ENCODE measurements at regions of chr6 and their contacts with region 1.

Region 1: DNA sequence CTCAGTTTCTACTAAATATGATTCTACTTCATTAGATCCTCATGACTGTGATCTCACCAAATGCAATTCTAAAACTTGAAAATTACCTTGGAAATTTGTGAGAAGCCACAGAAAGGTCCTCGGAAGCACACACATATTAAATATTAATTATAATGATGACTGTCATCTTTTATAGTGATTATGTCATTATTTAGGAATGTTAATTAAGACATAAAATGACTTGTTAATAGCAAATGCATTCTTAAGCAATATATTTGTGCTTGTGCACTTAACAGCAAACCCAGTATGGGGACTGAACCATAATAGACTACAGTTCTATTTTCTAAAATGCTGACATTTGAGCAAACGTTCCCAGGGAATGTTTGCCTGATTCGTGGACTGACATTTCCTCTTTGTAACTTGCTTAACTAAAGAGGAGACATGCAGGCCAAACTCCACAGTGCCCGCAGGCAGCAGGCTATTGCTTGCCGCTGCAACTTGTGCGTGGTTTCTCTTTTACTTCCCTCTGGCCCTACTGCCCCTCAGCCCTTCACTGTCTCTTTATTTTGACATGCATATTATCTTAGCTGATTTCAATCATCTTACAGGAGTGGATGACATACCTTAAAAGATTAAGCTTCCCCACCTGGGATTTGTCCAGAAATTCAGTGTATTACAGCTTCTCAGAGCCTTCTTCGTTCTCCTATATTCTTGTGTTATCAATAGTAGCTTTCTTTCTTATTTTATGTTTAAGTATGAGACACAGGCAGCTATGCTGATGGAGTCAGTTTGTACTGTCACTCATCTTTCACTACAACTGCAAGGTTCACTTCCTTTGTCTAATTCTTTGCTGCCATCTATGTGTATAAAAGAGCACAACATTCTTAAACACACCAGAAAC is 141.5 kb downstream of the GMDS start:
- DNase-seq: peak; percentile 45
- H3K27ac ChIP-seq: no peak overlapping the region
- CTCF ChIP-seq: peak; percentile 61; the same call in 1 of the 2 replicates

Region 2: GRCh38 chr6:1607516-1608221 is 496.2 kb before region 1 on chr6:
- CTCF ChIA-PET with region 1: interaction called, 17 read pairs
- POLR2A ChIA-PET with region 1: no interaction called
- DNase-seq: no peak
- H3K27ac ChIP-seq: no peak overlapping the region
- CTCF ChIP-seq: no peak

Region 3: DNA sequence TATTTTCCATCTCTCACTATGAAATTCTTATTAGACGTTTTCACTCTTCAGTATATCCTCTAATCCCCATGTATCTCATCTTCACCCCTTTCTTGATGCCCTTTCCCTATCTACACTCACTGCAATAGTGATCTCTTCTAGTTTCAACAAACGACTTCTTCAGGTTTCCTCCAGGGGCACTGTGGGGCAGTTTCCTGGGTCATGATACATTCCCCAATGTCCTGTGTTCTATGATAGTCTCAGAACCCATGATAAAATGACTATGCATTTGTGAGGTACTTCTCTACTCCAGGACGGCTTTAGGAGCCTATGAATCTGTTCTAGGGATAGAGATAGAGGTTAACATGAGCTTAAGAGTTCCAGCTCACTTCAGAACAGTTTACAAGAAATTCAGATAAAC is 310.9 kb before region 1 on chr6:
- CTCF ChIA-PET with region 1: no interaction called
- POLR2A ChIA-PET with region 1: no interaction called
- DNase-seq: peak; percentile 62
- H3K27ac ChIP-seq: no peak overlapping the region
- CTCF ChIP-seq: peak; percentile 43

Region 4: DNA sequence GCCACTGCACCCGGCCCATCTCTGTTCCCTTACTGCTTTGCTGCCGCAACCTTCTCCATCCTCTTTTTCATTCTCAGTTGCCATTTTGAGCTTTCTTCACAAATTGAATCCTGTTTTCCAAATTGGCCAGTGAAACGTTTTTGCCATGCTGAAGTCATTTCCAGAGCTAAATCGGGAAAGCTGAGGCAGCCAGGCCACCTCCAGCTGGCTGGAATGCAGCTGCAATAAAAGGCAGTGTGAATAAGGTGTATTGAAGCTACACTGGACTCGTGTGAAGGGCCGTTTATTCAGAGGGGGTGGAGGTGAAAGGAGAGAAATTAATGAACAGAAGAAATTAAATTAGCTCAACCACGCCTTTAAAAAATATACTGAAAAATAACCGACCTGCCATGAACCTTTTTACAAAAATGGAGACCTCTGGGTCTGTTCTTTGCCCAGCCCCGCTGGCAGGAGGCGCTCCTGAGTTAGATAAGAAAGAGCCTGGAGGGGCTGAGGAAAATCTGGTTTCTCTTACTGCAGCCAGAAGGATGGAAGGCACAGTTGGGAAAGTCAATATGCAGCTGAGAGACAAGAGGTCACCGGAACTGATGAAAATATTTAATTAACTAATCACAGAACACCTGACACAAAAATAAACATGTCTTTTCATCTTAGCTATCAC is 210.3 kb before region 1 on chr6:
- CTCF ChIA-PET with region 1: no interaction called
- POLR2A ChIA-PET with region 1: no interaction called
- DNase-seq: no peak
- H3K27ac ChIP-seq: no peak overlapping the region
- CTCF ChIP-seq: no peak

Region 5: GRCh38 chr6:2158596-2159271 is 54.9 kb after region 1 on chr6:
- CTCF ChIA-PET with region 1: no interaction called
- POLR2A ChIA-PET with region 1: no interaction called
- DNase-seq: peak; percentile 4
- H3K27ac ChIP-seq: no peak overlapping the region
- CTCF ChIP-seq: peak; percentile 20; the same call in 1 of the 2 replicates